ENCODE measurements at regions of chr20 and their contacts with region 1.

Region 1: DNA sequence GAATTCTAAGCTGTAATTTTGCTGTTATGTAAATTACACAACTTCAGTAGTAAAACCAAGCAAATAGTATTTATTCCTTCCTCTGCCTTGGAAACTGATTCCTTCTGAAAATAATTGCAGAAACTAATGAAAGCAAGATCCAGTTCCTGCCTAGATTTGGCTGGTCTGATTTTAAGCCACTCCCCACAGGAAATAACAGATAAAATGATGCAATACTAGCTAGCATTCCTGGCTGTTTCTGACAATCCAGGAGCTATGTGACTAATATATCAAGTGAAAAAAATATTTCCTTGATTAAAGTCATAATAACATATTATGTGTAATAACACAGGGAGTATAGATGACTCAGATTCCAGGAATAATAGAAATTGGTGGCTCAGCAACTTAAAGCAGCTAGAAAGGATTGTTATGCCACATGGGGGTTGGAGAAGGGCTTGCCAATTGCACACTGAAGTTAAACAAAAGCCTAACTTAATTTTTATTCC is 182.7 kb upstream of the SALL4 start:
- DNase-seq: peak; percentile 18 to 99
- H3K4me3 ChIP-seq: peak overlapping the region; percentile 27; the same call in 1 of the 2 replicates
- H3K27ac ChIP-seq: peak overlapping the region; percentile 90
- H3K4me1 ChIP-seq: peaks cover 28% of the 10 kb centered on the region
- H3K27me3 ChIP-seq: no peaks in the 10 kb centered on the region
- CTCF ChIP-seq: no peak

Region 2: DNA sequence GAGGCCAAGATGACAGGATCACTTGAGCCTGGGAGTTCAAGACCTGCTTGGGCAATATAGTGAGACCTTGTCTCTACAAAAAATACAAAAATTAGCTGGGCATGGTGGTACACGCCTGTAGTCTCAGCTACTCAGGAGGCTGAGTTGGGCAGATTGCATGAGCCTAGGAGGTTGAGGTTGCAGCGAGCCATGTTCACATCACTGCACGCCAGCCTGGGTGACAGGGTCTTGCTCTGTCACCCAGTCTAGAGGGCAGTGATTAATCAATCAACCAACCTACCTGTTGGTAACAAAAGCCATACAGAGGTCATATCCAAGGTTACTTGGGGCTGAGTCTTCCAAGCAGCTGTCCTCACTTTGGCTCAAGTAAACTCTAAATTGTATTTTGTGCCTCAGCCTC is 208.7 kb before region 1 on chr20:
- CTCF ChIA-PET with region 1: no interaction called
- POLR2A ChIA-PET with region 1: interaction called, 31 read pairs
- intact Hi-C with region 1: no loop called
- DNase-seq: no peak
- H3K4me3 ChIP-seq: no peak overlapping the region
- H3K27ac ChIP-seq: no peak overlapping the region
- H3K4me1 ChIP-seq: no peaks in the 10 kb centered on the region
- H3K27me3 ChIP-seq: no peaks in the 10 kb centered on the region
- CTCF ChIP-seq: no peak

Region 3: DNA sequence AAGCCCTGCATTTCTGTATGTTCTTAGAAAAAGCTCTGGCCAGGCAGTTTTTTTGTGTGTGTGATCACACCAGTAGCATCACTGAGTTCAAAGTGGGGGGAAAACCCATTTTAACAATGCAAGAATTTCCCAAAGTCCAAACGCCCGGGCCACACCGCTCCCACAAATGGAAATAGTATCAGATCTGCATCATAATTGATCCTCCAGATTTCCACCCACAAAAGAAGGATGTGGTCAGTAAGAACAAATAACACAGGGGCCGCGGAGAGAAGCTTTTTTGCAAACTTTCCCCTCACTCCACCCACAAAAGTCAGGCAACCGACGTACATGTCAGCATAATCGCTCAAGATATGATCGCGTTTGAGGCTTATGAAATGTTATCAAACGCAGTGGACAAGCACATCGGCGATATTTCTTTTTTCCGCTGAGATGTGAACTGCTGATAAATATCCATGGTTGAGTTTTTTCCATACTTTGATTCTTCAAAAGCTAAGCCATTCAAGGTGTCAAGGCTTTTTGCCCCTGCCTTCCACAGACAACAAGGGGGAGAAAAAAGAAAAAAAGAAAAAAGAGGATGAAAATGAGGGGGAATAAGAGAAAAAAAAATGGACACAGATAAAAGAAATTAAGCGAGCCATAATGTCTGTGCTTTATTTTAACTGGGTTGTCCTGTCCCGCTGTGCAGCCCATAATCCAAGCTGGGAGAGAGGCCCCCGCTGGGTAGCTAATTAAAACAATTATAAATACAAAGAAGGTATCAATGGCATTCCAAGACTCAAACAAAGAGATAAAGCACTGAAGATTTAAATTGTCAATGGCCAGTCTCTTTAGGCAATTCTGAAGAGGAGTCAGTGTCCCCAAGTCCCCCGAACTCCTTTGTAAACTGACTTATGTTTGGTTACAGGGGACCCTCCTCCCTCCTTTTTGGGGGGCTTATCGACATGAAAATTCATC is 63.1 kb after region 1 on chr20:
- CTCF ChIA-PET with region 1: no interaction called
- POLR2A ChIA-PET with region 1: interaction called, 11 read pairs
- intact Hi-C with region 1: no loop called
- DNase-seq: no peak
- H3K4me3 ChIP-seq: no peak overlapping the region
- H3K27ac ChIP-seq: no peak overlapping the region
- H3K4me1 ChIP-seq: no peaks in the 10 kb centered on the region
- H3K27me3 ChIP-seq: no peaks in the 10 kb centered on the region
- CTCF ChIP-seq: no peak

Region 4: GRCh38 chr20:52076164-52076563 is 91.2 kb after region 1 on chr20:
- CTCF ChIA-PET with region 1: no interaction called
- POLR2A ChIA-PET with region 1: no interaction called
- intact Hi-C with region 1: no loop called
- DNase-seq: no peak
- H3K4me3 ChIP-seq: no peak overlapping the region
- H3K27ac ChIP-seq: no peak overlapping the region
- H3K4me1 ChIP-seq: no peaks in the 10 kb centered on the region
- H3K27me3 ChIP-seq: no peaks in the 10 kb centered on the region
- CTCF ChIP-seq: no peak

Measured in PC-9 (cell line).